Activated naive CD4-positive, alpha-beta T cell treated with anti-CD3 and anti-CD28 coated beads for 36 hours (primary cell): ENCODE measurements at regions of chr4 and their contacts with region 1.

Region 1: DNA sequence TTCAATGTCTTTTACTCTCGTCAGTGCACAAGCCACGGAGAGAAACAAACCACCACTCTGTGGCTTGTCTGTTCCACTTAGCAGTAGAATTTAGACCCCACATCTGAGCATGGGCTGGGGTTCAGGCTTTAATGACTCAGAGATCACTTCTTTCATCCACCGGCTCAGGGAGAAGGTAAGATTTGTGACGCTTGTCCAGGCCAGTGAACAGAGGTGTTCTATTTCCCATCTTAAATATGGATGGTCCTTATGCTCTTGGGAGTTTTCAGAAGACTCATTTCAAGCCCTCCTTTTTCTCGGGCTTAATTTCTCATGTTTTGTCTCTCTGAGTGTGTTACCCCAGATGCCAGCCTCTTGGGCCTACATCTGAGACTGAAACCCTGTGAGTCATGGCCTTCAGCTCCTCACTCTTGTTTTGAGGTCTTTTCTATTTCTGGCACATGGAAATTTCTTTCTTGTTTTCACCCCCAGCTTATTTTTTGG is 127.4 kb upstream of the SFRP2 start:
- DNase-seq: peak; percentile 66
- H3K4me3 Mint-ChIP-seq: no peak overlapping the region
- H3K27ac Mint-ChIP-seq: peak overlapping the region; percentile 9
- H3K4me1 Mint-ChIP-seq: peaks cover 16% of the 10 kb centered on the region
- H3K27me3 Mint-ChIP-seq: peaks cover 16% of the 10 kb centered on the region

Region 2: GRCh38 chr4:152920768-152921167 is 995.5 kb before region 1 on chr4:
- CTCF ChIA-PET with region 1: no interaction called
- intact Hi-C with region 1: no loop called
- DNase-seq: no peak
- H3K4me3 Mint-ChIP-seq: no peak overlapping the region
- H3K27ac Mint-ChIP-seq: no peak overlapping the region
- H3K4me1 Mint-ChIP-seq: no peaks in the 10 kb centered on the region
- H3K27me3 Mint-ChIP-seq: peaks cover 3% of the 10 kb centered on the region

Region 3: DNA sequence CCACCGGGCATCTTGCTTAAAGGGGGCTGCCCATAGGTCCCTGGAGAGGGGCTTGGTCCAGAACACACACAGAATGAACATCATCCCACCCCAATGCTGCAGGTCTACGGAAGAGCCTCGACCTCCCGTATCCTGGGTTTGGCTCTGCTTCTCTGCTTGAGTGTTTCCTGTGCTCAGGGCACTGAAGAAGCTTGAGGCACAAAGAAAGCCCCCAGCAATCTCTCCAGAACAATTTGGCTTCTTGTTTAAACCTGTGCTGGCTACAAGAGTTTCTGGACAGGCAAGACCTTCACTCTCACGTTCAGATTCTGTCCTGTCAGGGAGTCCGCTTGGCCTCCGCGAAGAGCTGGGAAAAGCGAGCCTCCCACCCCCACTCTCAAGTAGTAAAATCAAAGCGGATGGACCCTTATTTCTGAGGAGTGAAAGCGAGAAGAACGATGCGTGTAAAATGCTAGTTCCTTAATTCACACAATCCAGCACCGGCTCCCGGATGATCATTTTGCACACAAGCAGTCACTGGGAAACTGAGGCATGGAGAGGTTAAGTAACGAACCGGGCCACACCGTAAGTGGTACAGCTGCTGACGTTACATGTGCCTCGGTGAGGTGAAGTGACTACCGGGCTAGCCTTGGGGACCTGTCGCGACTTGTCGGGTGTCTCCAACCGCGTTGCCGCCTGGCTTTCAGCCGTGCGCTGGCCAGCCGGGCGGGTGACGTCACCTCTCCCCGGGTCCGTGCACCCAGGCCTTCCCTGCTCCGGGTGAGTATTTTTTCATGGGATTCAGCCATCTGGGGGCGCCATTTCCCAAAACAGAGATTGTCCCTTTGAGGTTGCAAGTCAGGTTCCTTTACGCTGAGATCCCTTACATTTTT is 124.3 kb before region 1 on chr4:
- CTCF ChIA-PET with region 1: no interaction called
- intact Hi-C with region 1: loop called (anchors 5 kb)
- DNase-seq: peak; percentile 85
- H3K4me3 Mint-ChIP-seq: peak overlapping the region; percentile 67
- H3K27ac Mint-ChIP-seq: no peak overlapping the region
- H3K4me1 Mint-ChIP-seq: peaks cover 44% of the 10 kb centered on the region
- H3K27me3 Mint-ChIP-seq: peaks cover 79% of the 10 kb centered on the region

Region 4: DNA sequence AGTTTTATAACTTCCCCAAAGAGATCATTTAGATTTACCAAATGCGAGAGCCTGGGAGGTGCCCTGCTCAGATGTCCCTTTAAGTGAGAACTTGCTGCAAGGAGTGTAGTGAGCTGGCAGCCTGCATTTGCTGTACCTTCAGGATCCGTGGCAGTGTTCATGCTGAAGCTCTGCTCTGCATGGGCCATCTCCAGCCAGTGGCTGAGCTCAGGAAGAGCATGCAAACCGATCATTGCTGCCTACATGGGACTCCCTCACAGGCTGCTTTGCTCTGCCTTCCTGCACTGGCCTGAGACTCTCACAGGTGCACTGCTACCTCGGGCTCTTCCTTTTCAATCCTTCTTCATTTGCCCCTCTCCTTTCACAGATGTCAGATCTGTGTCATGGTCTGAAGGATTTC is 24.6 kb after region 1 on chr4:
- CTCF ChIA-PET with region 1: no interaction called
- intact Hi-C with region 1: loop called (anchors 1 kb)
- DNase-seq: no peak
- H3K4me3 Mint-ChIP-seq: no peak overlapping the region
- H3K27ac Mint-ChIP-seq: no peak overlapping the region
- H3K4me1 Mint-ChIP-seq: peaks cover 13% of the 10 kb centered on the region
- H3K27me3 Mint-ChIP-seq: peaks cover 24% of the 10 kb centered on the region

Region 5: DNA sequence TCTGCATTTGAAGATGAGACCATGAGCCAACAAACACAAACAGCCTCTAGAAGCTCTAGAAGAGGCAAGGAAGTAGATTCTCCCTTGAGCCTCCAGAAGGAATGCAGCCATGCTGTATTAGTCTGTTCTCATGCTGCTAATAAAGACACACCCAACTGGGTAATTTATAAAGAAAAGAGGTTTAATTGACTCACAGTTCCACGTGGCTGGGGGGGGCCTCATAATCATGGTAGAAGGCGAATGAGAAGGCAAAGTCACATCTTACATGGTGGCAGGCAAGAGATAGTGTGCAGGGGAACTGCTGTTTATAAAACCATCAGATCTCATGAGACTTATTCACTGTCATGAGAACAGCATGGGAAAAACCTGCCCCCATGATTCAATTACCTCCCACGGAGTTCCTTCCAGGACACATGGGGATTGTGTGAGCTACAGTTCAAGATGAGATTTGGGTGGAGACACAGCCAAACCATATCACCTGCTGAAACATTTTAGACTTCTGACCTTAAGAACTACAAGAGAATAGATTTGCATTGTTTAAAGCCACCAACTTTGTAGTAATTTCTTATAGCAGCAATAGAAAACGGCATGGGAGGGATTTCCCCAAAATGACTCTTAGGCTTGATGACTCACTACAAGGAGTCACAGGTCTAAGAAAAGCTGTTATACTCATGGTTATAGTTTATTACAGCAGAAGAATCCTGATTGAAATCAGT is 157.0 kb after region 1 on chr4:
- CTCF ChIA-PET with region 1: no interaction called
- intact Hi-C with region 1: loop called (anchors 10 kb)
- DNase-seq: peak; percentile 37
- H3K4me3 Mint-ChIP-seq: no peak overlapping the region
- H3K27ac Mint-ChIP-seq: peak overlapping the region; percentile 46
- H3K4me1 Mint-ChIP-seq: peaks cover 8% of the 10 kb centered on the region
- H3K27me3 Mint-ChIP-seq: peaks cover 21% of the 10 kb centered on the region